ENCODE measurements at regions of chr9 and their contacts with region 1.

Region 1: GRCh38 chr9:131645078-131645776 is 94.6 kb downstream of the RAPGEF1 start:
- DNase-seq: peak in 1 of 2 donors; percentile 5
- H3K4me3 ChIP-seq: no peak overlapping the region
- H3K27ac ChIP-seq: no peak overlapping the region
- H3K4me1 ChIP-seq: peaks cover 0 to 39% (median 27%) of the 10 kb centered on the region in 4 donors
- H3K27me3 ChIP-seq: no peaks in the 10 kb centered on the region
- CTCF ChIP-seq: no peak

Region 2: DNA sequence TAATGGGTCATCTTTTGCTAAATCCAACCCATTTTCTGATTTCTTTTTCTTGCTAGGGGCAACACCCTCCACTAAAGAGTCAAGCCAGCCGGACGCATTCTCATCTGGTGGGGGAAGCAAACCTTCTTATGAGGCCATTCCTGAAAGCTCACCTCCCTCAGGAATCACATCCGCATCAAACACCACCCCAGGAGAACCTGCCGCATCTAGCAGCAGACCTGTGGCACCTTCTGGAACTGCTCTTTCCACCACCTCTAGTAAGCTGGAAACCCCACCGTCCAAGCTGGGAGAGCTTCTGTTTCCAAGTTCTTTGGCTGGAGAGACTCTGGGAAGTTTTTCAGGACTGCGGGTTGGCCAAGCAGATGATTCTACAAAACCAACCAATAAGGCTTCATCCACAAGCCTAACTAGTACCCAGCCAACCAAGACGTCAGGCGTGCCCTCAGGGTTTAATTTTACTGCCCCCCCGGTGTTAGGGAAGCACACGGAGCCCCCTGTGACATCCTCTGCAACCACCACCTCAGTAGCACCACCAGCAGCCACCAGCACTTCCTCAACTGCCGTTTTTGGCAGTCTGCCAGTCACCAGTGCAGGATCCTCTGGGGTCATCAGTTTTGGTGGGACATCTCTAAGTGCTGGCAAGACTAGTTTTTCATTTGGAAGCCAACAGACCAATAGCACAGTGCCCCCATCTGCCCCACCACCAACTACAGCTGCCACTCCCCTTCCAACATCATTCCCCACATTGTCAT is 447.9 kb before region 1 on chr9:
- intact Hi-C with region 1: no loop called
- DNase-seq: no peak
- H3K4me3 ChIP-seq: no peak overlapping the region
- H3K27ac ChIP-seq: no peak overlapping the region
- H3K4me1 ChIP-seq: no peaks in the 10 kb centered on the region
- H3K27me3 ChIP-seq: no peaks in the 10 kb centered on the region
- CTCF ChIP-seq: no peak

Region 3: GRCh38 chr9:131304687-131305394 is 340.4 kb before region 1 on chr9:
- intact Hi-C with region 1: no loop called
- DNase-seq: no peak
- H3K4me3 ChIP-seq: no peak overlapping the region
- H3K27ac ChIP-seq: no peak overlapping the region
- H3K4me1 ChIP-seq: no peaks in the 10 kb centered on the region
- H3K27me3 ChIP-seq: no peaks in the 10 kb centered on the region
- CTCF ChIP-seq: no peak

Region 4: DNA sequence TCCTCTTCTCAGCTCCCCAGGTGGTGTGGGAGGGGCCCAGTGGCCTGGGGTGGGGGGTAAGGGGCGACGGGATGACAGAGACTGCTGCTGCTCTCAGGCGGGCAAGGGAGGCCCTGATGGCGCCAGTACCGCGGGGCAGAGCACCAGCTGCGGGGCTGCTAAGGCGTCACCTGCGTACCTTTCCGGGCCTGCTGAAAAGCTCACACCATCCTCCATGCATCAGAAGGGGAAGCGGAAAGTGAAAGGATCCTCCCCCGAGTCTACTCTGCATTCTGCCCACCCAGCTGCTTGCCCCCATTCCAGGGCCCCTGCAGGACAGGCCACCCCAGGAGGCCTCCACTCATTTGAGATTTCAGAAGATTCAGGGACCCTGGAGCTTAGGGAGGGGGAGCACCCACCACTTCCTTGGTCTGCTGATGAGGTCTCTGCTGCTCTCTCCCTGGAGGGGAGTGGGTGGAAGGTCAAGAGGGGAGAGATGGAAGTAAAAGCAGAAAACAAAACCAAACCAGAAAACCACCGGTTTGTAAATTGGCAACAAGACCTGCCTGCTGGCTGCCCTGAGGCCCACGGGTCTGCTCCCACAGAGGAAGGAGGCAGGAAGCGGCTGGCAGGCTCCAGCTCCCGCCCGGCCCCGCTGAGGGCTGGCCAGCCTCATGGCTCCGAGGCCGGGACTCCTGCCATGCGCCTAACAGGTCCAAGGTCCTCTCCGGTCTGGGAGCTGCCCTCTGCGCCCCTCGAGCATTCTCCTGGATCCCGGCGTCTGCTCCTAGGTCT is 66.3 kb before region 1 on chr9:
- intact Hi-C with region 1: no loop called
- DNase-seq: no peak
- H3K4me3 ChIP-seq: no peak overlapping the region
- H3K27ac ChIP-seq: no peak overlapping the region
- H3K4me1 ChIP-seq: peaks cover 0 to 5% (median 0%) of the 10 kb centered on the region in 4 donors
- H3K27me3 ChIP-seq: no peaks in the 10 kb centered on the region
- CTCF ChIP-seq: no peak

Region 5: DNA sequence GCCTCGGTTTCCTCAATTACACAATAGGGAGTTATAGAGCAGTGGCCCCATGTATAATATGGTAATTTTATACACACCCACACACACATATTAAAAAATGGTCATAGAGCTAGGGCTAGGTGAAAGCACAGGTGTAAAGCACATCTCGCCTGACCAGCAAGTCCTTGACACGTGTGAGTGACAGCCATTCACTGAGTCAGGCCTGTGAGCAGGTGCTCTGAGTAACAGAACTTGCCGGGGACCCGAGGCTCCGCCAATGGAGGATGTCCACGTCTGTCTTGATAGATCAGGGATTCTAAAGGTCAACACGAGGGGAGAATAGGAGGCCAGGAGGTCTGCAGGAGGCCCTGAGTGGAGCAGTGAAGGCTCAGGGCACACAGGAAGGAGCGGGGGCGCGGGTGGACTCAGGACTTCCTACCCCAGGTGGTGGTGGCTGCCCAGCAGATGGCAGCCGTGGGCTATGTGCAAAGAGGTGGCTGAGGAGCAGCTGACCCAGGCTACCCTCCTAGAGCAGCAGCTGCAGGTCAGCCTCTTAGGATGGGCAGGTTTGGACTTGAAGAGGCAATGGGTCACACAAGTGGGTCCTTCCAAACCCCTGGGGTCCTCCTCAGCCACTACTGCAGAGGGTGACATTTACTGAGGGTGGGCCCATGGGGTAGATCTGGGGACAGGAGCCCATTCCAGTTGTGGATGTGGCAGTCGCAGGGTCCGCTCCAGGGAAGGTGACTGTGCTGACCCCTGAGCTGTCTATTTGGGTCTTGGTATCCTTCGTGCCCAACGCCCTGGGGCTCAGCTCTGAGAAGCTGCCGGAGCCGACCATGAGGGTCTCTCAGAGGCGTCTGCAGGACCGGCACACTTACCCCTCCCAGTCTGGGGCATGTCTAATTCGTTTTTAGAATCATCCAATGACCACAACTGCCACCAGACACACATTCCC is 54.1 kb before region 1 on chr9:
- intact Hi-C with region 1: loop called (anchors 10 kb)
- DNase-seq: peak; percentile 76 to 85
- H3K4me3 ChIP-seq: no peak overlapping the region
- H3K27ac ChIP-seq: no peak overlapping the region
- H3K4me1 ChIP-seq: peaks cover 0 to 10% (median 0%) of the 10 kb centered on the region in 4 donors
- H3K27me3 ChIP-seq: no peaks in the 10 kb centered on the region
- CTCF ChIP-seq: peak; percentile 83 to 98